GM12878 (cell line): ENCODE measurements at regions of chr18 and their contacts with region 1.

Region 1: GRCh38 chr18:59996370-59996966 is 96.7 kb downstream of the PMAIP1 start:
- DNase-seq: no peak
- ATAC-seq: peak; percentile 85
- H3K4me3 ChIP-seq: no peak overlapping the region
- H3K27ac ChIP-seq: no peak overlapping the region
- H3K4me1 ChIP-seq: no peaks in the 10 kb centered on the region
- H3K27me3 ChIP-seq: no peaks in the 10 kb centered on the region
- CTCF ChIP-seq: peak; percentile 74 to 79 (median 75)
- EP300 ChIP-seq: no peak
- POLR2A ChIP-seq: no peak
- RAD21 ChIP-seq: peak; percentile 70

Region 2: DNA sequence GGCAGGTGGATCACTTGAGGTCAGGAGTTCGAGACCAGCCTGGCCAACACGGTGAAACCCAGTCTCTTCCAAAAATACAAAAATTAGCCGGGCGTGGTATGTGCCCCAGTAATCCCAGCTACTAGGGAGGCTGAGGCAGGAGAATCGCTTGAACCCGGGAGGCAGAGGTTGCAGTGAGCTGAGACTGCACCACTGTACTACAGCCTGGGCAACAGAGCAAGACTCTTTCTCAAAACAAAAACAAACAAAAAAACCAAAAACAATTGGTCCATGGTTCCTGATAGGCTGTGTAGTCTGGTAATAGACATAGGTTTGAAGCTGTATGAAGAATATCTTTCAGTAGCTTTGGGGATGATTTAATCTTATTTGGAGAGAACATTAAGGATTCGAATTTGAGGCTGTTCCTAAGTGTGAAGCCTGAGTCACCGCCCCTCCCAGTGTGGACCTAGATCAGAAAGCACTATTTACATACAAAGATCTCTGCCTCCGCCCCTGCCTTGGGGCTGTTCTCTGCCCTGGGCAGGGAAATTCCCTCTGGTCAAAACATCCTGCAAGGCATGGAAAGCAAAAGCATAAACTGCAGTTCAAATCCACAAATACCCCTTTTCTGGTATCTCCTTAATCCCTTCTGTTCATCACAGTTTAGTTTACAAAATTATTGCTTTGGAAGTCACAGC is 149.5 kb before region 1 on chr18:
- CTCF ChIA-PET with region 1: interaction called, 13 read pairs
- POLR2A ChIA-PET with region 1: no interaction called
- RAD21 ChIA-PET with region 1: interaction called, 15 read pairs
- SMC1A ChIA-PET with region 1: interaction called, 14 read pairs
- in situ Hi-C with region 1: no loop called
- intact Hi-C with region 1: no loop called
- DNase-seq: peak; percentile 83
- ATAC-seq: peak; percentile 93
- H3K4me3 ChIP-seq: peak overlapping the region; percentile 8; the same call in 1 of the 2 replicates
- H3K27ac ChIP-seq: peak overlapping the region; percentile 82
- H3K4me1 ChIP-seq: peaks cover 24% of the 10 kb centered on the region
- H3K27me3 ChIP-seq: no peaks in the 10 kb centered on the region
- CTCF ChIP-seq: no peak
- EP300 ChIP-seq: peak in 1 of 2 experiments; percentile 37; a peak in 1 of 4 replicates
- POLR2A ChIP-seq: no peak
- RAD21 ChIP-seq: peak; percentile 26; the same call in 1 of the 2 replicates

Region 3: GRCh38 chr18:59918320-59918755 is 78.1 kb before region 1 on chr18:
- CTCF ChIA-PET with region 1: interaction called, 14 read pairs
- POLR2A ChIA-PET with region 1: no interaction called
- RAD21 ChIA-PET with region 1: interaction called, 6 read pairs
- SMC1A ChIA-PET with region 1: interaction called, 81 read pairs
- in situ Hi-C with region 1: no loop called
- intact Hi-C with region 1: no loop called
- DNase-seq: peak; percentile 80
- ATAC-seq: peak; percentile 82
- H3K4me3 ChIP-seq: peak overlapping the region; percentile 5; the same call in 1 of the 2 replicates
- H3K27ac ChIP-seq: peak overlapping the region; percentile 74
- H3K4me1 ChIP-seq: peaks cover 47% of the 10 kb centered on the region
- H3K27me3 ChIP-seq: no peaks in the 10 kb centered on the region
- CTCF ChIP-seq: no peak
- EP300 ChIP-seq: peak in 1 of 2 experiments; percentile 27; a peak in 1 of 4 replicates
- POLR2A ChIP-seq: peak; percentile 44; the same call in 1 of the 2 replicates
- RAD21 ChIP-seq: no peak

Region 4: GRCh38 chr18:60020601-60020925 is 24.1 kb after region 1 on chr18:
- CTCF ChIA-PET with region 1: interaction called, 10 read pairs
- POLR2A ChIA-PET with region 1: interaction called, 3 read pairs
- RAD21 ChIA-PET with region 1: no interaction called
- SMC1A ChIA-PET with region 1: interaction called, 7 read pairs
- in situ Hi-C with region 1: no loop called
- intact Hi-C with region 1: no loop called
- DNase-seq: no peak
- ATAC-seq: no peak
- H3K4me3 ChIP-seq: no peak overlapping the region
- H3K27ac ChIP-seq: no peak overlapping the region
- H3K4me1 ChIP-seq: no peaks in the 10 kb centered on the region
- H3K27me3 ChIP-seq: no peaks in the 10 kb centered on the region
- CTCF ChIP-seq: no peak
- EP300 ChIP-seq: no peak
- POLR2A ChIP-seq: no peak
- RAD21 ChIP-seq: no peak

Region 5: GRCh38 chr18:60549338-60549960 is 553.0 kb after region 1 on chr18:
- CTCF ChIA-PET with region 1: interaction called, 63 read pairs
- POLR2A ChIA-PET with region 1: no interaction called
- RAD21 ChIA-PET with region 1: interaction called, 31 read pairs
- SMC1A ChIA-PET with region 1: interaction called, 46 read pairs
- in situ Hi-C with region 1: loop called (anchors 5 kb)
- intact Hi-C with region 1: loop called (anchors 2 kb)
- DNase-seq: no peak
- ATAC-seq: peak; percentile 67
- H3K4me3 ChIP-seq: no peak overlapping the region
- H3K27ac ChIP-seq: no peak overlapping the region
- H3K4me1 ChIP-seq: no peaks in the 10 kb centered on the region
- H3K27me3 ChIP-seq: no peaks in the 10 kb centered on the region
- CTCF ChIP-seq: peak; percentile 57 to 82 (median 66)
- EP300 ChIP-seq: no peak
- POLR2A ChIP-seq: no peak
- RAD21 ChIP-seq: peak; percentile 88